Caco-2 (cell line): ENCODE measurements at regions of chr16 and their contacts with region 1.

Region 1: DNA sequence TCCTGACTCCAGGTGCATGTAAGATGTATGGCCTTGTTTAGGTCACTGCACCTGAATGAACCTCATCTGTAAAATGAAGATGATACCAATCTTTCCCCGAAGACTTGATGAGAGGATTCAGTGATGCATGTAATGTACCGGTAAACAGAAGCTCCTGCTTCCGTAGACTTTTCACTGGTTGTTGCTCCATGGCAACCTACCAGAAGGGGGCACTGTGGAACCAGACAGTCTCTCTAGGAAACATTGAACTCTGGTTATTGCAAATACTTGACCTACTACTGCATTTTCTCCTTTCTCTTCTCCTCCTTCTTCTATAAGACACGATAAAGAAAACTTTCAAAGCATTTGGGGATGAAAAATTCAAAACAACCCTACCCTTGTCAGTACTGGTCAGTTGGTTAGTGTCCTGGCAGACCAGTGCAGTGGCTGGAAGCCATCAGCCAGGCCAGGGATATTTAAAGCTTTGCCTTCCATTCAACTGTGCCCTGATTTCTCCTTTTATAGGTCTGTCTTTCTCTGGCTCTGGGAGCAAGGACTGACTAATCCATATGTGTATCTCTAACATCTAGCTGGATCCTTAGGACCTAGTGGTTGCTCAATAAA is 667.4 kb upstream of the SALL1 start:
- DNase-seq: peak in 1 of 2 experiments; percentile 48
- H3K4me3 ChIP-seq: no peak overlapping the region
- H3K4me3 Mint-ChIP-seq: no peak overlapping the region
- H3K27ac Mint-ChIP-seq: no peak overlapping the region
- H3K4me1 ChIP-seq: no peaks in the 10 kb centered on the region
- H3K4me1 Mint-ChIP-seq: no peaks in the 10 kb centered on the region
- H3K27me3 ChIP-seq: no peaks in the 10 kb centered on the region
- H3K27me3 Mint-ChIP-seq: peaks cover 2% of the 10 kb centered on the region
- CTCF ChIP-seq: peak; percentile 44 to 57

Region 2: GRCh38 chr16:51797669-51798259 is 20.7 kb before region 1 on chr16:
- CTCF ChIA-PET with region 1: no interaction called
- POLR2A ChIA-PET with region 1: no interaction called
- intact Hi-C with region 1: no loop called
- DNase-seq: no peak
- H3K4me3 ChIP-seq: no peak overlapping the region
- H3K4me3 Mint-ChIP-seq: no peak overlapping the region
- H3K27ac Mint-ChIP-seq: no peak overlapping the region
- H3K4me1 ChIP-seq: no peaks in the 10 kb centered on the region
- H3K4me1 Mint-ChIP-seq: no peaks in the 10 kb centered on the region
- H3K27me3 ChIP-seq: no peaks in the 10 kb centered on the region
- H3K27me3 Mint-ChIP-seq: no peaks in the 10 kb centered on the region
- CTCF ChIP-seq: no peak

Region 3: DNA sequence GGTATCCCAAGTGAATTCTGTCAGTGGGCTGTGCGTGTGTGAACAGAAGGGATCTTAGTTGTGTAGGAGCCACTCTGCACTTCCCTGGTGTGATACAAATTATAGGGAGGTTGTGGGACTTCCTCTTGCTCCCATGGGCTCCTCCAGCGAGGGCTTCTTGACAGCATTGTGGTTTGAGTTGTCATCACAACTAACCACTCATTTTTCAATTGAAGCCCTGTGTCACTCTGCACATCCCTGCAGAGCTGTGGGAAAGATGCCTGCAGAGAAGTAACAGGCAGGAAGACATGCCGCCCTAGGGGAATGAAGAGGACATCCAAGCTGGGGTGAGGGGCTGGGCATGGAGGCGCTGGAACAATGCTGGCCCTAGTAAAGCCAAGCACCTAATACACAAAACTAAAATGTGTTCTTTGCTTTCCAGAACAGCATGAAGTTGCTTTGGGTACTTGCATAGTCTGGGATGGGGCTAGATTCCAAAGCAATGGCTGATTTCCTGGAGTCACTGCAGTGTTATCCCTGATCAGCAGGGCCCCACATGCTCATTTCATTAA is 36.0 kb after region 1 on chr16:
- CTCF ChIA-PET with region 1: no interaction called
- POLR2A ChIA-PET with region 1: no interaction called
- intact Hi-C with region 1: loop called (anchors 1 kb)
- DNase-seq: no peak
- H3K4me3 ChIP-seq: no peak overlapping the region
- H3K4me3 Mint-ChIP-seq: no peak overlapping the region
- H3K27ac Mint-ChIP-seq: no peak overlapping the region
- H3K4me1 ChIP-seq: no peaks in the 10 kb centered on the region
- H3K4me1 Mint-ChIP-seq: no peaks in the 10 kb centered on the region
- H3K27me3 ChIP-seq: no peaks in the 10 kb centered on the region
- H3K27me3 Mint-ChIP-seq: peaks cover 10% of the 10 kb centered on the region
- CTCF ChIP-seq: no peak

Region 4: GRCh38 chr16:51982715-51983680 is 164.6 kb after region 1 on chr16:
- CTCF ChIA-PET with region 1: interaction called, 3 read pairs
- POLR2A ChIA-PET with region 1: no interaction called
- intact Hi-C with region 1: loop called (anchors 1 kb)
- DNase-seq: peak; percentile 38 to 76
- H3K4me3 ChIP-seq: no peak overlapping the region
- H3K4me3 Mint-ChIP-seq: no peak overlapping the region
- H3K27ac Mint-ChIP-seq: no peak overlapping the region
- H3K4me1 ChIP-seq: no peaks in the 10 kb centered on the region
- H3K4me1 Mint-ChIP-seq: no peaks in the 10 kb centered on the region
- H3K27me3 ChIP-seq: no peaks in the 10 kb centered on the region; the same call in 1 of the 2 replicates
- H3K27me3 Mint-ChIP-seq: peaks cover 5% of the 10 kb centered on the region
- CTCF ChIP-seq: peak; percentile 71 to 82

Region 5: DNA sequence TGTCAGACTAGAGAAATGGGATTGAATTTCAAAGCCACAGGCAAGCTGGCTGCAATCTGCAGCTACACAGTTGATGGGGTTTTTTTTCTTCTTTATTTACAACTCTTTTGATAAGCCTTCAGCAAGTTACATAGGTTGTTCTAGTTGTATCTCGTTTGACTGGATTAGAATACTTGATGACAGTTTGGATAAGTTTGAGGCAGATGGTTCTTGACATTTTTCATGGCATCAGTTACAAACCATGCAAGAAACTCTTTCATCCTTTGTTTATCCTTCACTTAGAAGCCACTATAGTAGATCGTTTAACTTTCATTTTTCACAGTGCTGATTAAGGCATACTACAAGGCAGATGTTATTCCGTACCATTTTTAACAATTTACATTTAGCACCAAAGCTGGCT is 489.6 kb after region 1 on chr16:
- CTCF ChIA-PET with region 1: no interaction called
- POLR2A ChIA-PET with region 1: no interaction called
- intact Hi-C with region 1: no loop called
- DNase-seq: no peak
- H3K4me3 ChIP-seq: no peak overlapping the region
- H3K4me3 Mint-ChIP-seq: no peak overlapping the region
- H3K27ac Mint-ChIP-seq: no peak overlapping the region
- H3K4me1 ChIP-seq: no peaks in the 10 kb centered on the region
- H3K4me1 Mint-ChIP-seq: no peaks in the 10 kb centered on the region
- H3K27me3 ChIP-seq: no peaks in the 10 kb centered on the region
- H3K27me3 Mint-ChIP-seq: no peaks in the 10 kb centered on the region
- CTCF ChIP-seq: no peak